Left colon (tissue), 2 donors: ENCODE measurements at regions of chr11 and their contacts with region 1.

Region 1: GRCh38 chr11:46238967-46239800 is 38.3 kb upstream of the CREB3L1 start:
- DNase-seq: peak; percentile 76 to 81
- ATAC-seq: peak; percentile 73

Region 2: GRCh38 chr11:46306296-46306853 is 67.2 kb after region 1 on chr11:
- intact Hi-C with region 1: loop called (anchors 2 to 10 kb)
- DNase-seq: no peak
- ATAC-seq: no peak